Caco-2 (cell line): ENCODE measurements at regions of chr20 and their contacts with region 1.

Region 1: GRCh38 chr20:3316136-3316535 is 77.1 kb upstream of the SLC4A11 start:
- DNase-seq: no peak
- H3K4me3 ChIP-seq: no peak overlapping the region
- H3K4me3 Mint-ChIP-seq: no peak overlapping the region
- H3K27ac Mint-ChIP-seq: no peak overlapping the region
- H3K4me1 ChIP-seq: no peaks in the 10 kb centered on the region
- H3K4me1 Mint-ChIP-seq: peaks cover 5% of the 10 kb centered on the region
- H3K27me3 ChIP-seq: no peaks in the 10 kb centered on the region
- H3K27me3 Mint-ChIP-seq: no peaks in the 10 kb centered on the region
- CTCF ChIP-seq: no peak

Region 2: GRCh38 chr20:3051385-3052019 is 264.6 kb before region 1 on chr20:
- CTCF ChIA-PET with region 1: interaction called, 11 read pairs
- POLR2A ChIA-PET with region 1: no interaction called
- intact Hi-C with region 1: loop called (anchors 1 kb)
- DNase-seq: no peak
- H3K4me3 ChIP-seq: no peak overlapping the region
- H3K4me3 Mint-ChIP-seq: no peak overlapping the region
- H3K27ac Mint-ChIP-seq: no peak overlapping the region
- H3K4me1 ChIP-seq: peaks cover 7% of the 10 kb centered on the region; the same call in 1 of the 2 replicates
- H3K4me1 Mint-ChIP-seq: peaks cover 6% of the 10 kb centered on the region
- H3K27me3 ChIP-seq: no peaks in the 10 kb centered on the region
- H3K27me3 Mint-ChIP-seq: no peaks in the 10 kb centered on the region
- CTCF ChIP-seq: no peak

Region 3: DNA sequence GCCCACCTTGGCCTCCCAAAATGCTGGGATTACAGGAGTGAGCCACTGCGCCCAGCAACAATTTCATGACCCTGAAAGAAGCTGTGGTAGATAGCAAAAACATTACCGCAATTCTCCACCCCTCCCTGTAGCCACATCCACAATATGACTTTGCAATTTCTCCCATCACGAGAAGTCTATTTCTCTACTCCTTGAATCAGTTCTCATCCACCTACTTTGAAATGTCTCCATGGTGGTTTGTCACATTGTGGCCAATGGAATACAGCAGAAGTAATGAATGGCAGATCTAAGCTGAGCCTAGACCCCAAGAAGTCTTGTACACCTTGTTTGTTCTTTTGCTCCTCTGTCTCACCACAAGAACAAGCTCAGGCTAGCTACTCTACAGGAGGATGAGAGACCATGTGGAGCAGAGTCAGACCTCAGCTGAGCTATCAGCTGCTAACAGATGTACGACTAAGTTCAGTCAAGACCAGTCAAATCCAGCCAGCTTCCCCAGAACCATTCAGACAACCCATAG is 238.5 kb before region 1 on chr20:
- CTCF ChIA-PET with region 1: interaction called, 5 read pairs
- POLR2A ChIA-PET with region 1: no interaction called
- intact Hi-C with region 1: loop called (anchors 5 kb)
- DNase-seq: no peak
- H3K4me3 ChIP-seq: no peak overlapping the region
- H3K4me3 Mint-ChIP-seq: no peak overlapping the region
- H3K27ac Mint-ChIP-seq: no peak overlapping the region
- H3K4me1 ChIP-seq: no peaks in the 10 kb centered on the region
- H3K4me1 Mint-ChIP-seq: peaks cover 7% of the 10 kb centered on the region
- H3K27me3 ChIP-seq: no peaks in the 10 kb centered on the region
- H3K27me3 Mint-ChIP-seq: peaks cover 5% of the 10 kb centered on the region
- CTCF ChIP-seq: no peak

Region 4: DNA sequence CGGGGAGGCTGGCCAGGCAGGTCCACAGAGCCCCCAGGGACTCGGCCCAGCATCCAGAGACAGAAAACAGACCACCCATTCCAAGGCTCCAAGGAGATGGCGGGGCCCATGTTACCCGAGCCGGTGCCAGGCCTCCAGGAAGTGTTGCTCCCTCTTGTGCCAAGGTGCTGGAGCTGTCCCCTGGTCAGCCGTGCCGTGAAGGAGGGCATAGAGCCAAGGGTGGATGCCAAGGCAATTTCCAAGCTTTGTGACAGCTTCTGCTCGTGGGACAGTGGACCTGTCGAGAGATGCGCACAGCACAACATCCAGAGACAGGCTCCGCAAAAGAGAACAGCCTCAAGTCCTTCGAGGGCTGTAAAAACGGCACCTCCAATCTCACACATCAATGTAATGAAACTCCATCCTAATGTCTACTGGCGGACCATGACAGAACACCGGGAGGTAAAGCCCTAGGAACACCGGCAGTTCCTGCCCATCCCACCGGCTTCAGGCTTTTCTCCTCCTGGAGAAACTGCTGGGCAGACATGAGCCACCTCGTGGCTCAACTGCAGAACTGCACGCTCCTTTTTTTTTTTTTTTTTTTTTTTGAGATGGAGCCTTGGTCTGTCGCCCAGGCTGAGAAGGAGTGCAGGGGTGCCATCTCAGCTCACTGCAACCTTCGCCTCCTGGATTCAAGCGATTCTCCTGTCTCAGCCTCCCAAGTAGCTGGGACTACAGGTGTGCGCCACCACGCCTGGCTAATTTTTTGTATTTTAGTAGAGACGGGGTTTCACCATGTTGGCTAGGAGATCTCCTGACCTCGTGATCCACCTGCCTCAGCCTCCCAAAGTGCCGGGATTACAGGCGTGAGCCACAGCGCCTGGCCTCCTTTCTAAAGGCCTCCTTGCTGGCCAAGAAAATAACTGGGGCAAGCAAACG is 200.7 kb before region 1 on chr20:
- CTCF ChIA-PET with region 1: no interaction called
- POLR2A ChIA-PET with region 1: no interaction called
- intact Hi-C with region 1: loop called (anchors 5 kb)
- DNase-seq: peak; percentile 55 to 62
- H3K4me3 ChIP-seq: no peak overlapping the region
- H3K4me3 Mint-ChIP-seq: no peak overlapping the region
- H3K27ac Mint-ChIP-seq: no peak overlapping the region
- H3K4me1 ChIP-seq: no peaks in the 10 kb centered on the region
- H3K4me1 Mint-ChIP-seq: no peaks in the 10 kb centered on the region
- H3K27me3 ChIP-seq: no peaks in the 10 kb centered on the region
- H3K27me3 Mint-ChIP-seq: no peaks in the 10 kb centered on the region
- CTCF ChIP-seq: peak; percentile 76 to 89

Region 5: GRCh38 chr20:3218307-3218988 is 97.7 kb before region 1 on chr20:
- CTCF ChIA-PET with region 1: interaction called, 6 read pairs
- POLR2A ChIA-PET with region 1: no interaction called
- intact Hi-C with region 1: loop called (anchors 2 kb)
- DNase-seq: peak; percentile 55 to 75
- H3K4me3 ChIP-seq: no peak overlapping the region
- H3K4me3 Mint-ChIP-seq: no peak overlapping the region
- H3K27ac Mint-ChIP-seq: no peak overlapping the region
- H3K4me1 ChIP-seq: peaks cover 19% of the 10 kb centered on the region
- H3K4me1 Mint-ChIP-seq: peaks cover 9% of the 10 kb centered on the region
- H3K27me3 ChIP-seq: no peaks in the 10 kb centered on the region
- H3K27me3 Mint-ChIP-seq: no peaks in the 10 kb centered on the region
- CTCF ChIP-seq: peak; percentile 67 to 76

Region 6: GRCh38 chr20:3330046-3330741 is 14.1 kb after region 1 on chr20:
- CTCF ChIA-PET with region 1: interaction called, 10 read pairs
- POLR2A ChIA-PET with region 1: interaction called, 4 read pairs
- intact Hi-C with region 1: no loop called
- DNase-seq: no peak
- H3K4me3 ChIP-seq: no peak overlapping the region
- H3K4me3 Mint-ChIP-seq: no peak overlapping the region
- H3K27ac Mint-ChIP-seq: no peak overlapping the region
- H3K4me1 ChIP-seq: no peaks in the 10 kb centered on the region
- H3K4me1 Mint-ChIP-seq: peaks cover 6% of the 10 kb centered on the region
- H3K27me3 ChIP-seq: no peaks in the 10 kb centered on the region
- H3K27me3 Mint-ChIP-seq: peaks cover 3% of the 10 kb centered on the region
- CTCF ChIP-seq: peak; percentile 12 to 17